Caco-2 (cell line): ENCODE measurements at regions of chr15 and their contacts with region 1.

Region 1: DNA sequence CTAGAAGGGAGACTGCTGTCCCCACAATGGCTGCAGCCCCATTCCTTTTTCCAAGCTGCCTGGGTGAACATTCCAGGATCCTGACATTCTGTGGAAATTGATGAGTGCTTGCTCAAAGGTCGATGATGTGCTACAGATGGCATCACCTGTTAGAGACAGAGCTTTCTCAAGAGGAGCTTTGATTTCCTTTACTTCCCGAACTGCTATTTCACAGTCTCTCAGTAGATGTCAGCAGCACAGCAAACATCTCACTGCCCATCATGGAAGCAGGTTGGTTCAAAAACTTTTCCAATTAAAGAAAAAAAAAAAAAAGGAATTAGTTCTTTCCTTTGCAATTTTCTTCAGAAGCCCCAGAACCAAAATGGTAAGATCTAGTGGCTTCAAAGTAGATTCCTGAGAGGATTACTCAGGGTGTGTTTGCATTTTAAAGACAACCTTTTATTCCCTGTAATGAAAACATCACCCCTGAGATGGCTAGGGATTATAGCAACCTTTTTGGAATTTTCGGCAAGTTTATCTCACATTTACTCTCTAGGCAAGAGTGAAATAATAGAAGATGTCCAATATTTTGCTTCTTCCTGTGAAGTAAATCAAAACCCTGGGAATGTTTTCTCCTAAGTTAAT is 44.8 kb downstream of the POLR2M start:
- DNase-seq: peak in 1 of 2 experiments; percentile 29
- H3K4me3 ChIP-seq: no peak overlapping the region
- H3K4me3 Mint-ChIP-seq: no peak overlapping the region
- H3K27ac Mint-ChIP-seq: no peak overlapping the region
- H3K4me1 ChIP-seq: no peaks in the 10 kb centered on the region
- H3K4me1 Mint-ChIP-seq: no peaks in the 10 kb centered on the region
- H3K27me3 ChIP-seq: no peaks in the 10 kb centered on the region
- H3K27me3 Mint-ChIP-seq: no peaks in the 10 kb centered on the region
- CTCF ChIP-seq: peak; percentile 51 to 62

Region 2: DNA sequence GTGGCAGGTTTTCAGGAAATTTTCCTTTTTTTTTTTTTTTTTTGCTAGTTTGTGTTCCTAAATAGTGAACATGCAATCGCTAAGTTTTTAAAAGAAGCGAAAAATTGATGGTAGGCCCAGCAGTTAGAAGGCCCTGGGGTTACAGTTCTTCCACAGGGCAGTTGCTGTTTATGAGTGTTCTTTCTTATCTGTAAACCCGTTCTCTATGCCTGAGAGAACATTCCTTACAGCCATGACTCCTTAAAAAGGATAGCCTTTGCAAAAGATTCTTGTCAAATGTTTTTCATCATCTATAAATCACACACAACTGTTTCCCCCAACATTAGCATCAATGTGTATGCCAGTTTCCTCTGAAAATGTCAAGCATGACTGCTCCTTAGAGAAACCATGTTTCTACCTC is 183.4 kb before region 1 on chr15:
- CTCF ChIA-PET with region 1: no interaction called
- POLR2A ChIA-PET with region 1: no interaction called
- intact Hi-C with region 1: no loop called
- DNase-seq: no peak
- H3K4me3 ChIP-seq: no peak overlapping the region
- H3K4me3 Mint-ChIP-seq: no peak overlapping the region
- H3K27ac Mint-ChIP-seq: no peak overlapping the region
- H3K4me1 ChIP-seq: no peaks in the 10 kb centered on the region
- H3K4me1 Mint-ChIP-seq: no peaks in the 10 kb centered on the region
- H3K27me3 ChIP-seq: no peaks in the 10 kb centered on the region
- H3K27me3 Mint-ChIP-seq: no peaks in the 10 kb centered on the region
- CTCF ChIP-seq: no peak

Region 3: DNA sequence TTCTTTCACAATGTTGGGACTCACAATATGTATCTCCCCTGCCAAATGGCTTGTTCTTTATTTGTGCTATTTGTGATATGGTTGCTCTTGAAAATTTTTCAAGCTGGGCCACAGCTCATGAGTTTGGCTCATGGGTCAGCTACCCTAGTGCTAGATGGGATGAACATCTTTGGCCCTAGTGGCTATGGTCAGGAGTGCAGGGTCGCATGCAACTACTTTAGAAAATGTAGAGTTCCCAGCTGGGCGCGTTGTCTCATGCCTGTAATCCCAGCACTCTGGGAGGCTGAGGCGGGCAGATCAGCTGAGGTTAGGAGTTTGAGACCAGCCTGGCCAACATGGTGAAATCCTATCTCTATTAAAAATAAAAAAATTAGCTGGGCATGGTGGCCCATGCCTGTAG is 11.0 kb after region 1 on chr15:
- CTCF ChIA-PET with region 1: interaction called, 11 read pairs
- POLR2A ChIA-PET with region 1: no interaction called
- intact Hi-C with region 1: no loop called
- DNase-seq: peak in 1 of 2 experiments; percentile 6
- H3K4me3 ChIP-seq: no peak overlapping the region
- H3K4me3 Mint-ChIP-seq: no peak overlapping the region
- H3K27ac Mint-ChIP-seq: no peak overlapping the region
- H3K4me1 ChIP-seq: no peaks in the 10 kb centered on the region
- H3K4me1 Mint-ChIP-seq: no peaks in the 10 kb centered on the region
- H3K27me3 ChIP-seq: no peaks in the 10 kb centered on the region; the same call in 1 of the 2 replicates
- H3K27me3 Mint-ChIP-seq: peaks cover 9% of the 10 kb centered on the region
- CTCF ChIP-seq: no peak